Heart left ventricle (tissue), 16 donors: ENCODE measurements at regions of chr5 and their contacts with region 1.

Region 1: GRCh38 chr5:1140171-1140817 is 28.4 kb upstream of the SLC12A7 start:
- DNase-seq: peak; percentile 81 to 91 (median 84)
- ATAC-seq: peak; percentile 72 to 89 (median 78)
- H3K4me3 ChIP-seq: no peak overlapping the region
- H3K27ac ChIP-seq: no peak overlapping the region
- H3K4me1 ChIP-seq: peaks cover 0 to 30% (median 13%) of the 10 kb centered on the region in 12 donors
- H3K27me3 ChIP-seq: no peaks in the 10 kb centered on the region
- CTCF ChIP-seq: peak; percentile 86 to 97 (median 90)
- POLR2A ChIP-seq: no peak

Region 2: DNA sequence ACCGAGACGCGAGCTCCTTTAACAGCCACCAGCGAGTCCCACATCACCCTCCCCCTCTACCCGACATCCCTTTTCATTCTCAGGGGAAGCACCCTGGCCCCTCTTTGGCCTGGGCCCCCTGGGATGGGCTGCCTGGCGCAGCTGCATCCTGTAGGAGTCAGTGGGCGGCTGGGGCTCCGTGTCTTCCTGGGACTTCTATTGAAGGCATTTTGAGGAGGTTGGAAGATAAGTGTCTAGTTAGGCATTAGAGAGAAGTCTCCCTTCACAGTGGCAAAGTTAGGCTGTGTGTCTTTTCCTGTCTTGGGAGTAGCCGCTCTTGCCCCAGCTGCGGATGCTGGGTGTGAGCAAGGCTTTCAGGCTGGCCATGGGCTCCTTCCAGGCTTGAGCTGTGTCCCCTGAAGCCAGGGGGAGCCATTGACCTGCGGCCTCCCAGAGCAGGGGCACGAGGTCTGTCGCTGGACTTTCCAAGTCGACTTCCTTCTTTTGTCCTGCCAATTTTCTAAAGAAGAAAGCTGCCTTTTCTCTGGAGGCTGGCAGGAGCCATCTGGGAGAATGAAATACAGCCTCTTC is 150.2 kb before region 1 on chr5:
- intact Hi-C with region 1: loop called in 4 of 10 experiments (anchors 1 to 5 kb)
- DNase-seq: peak; percentile 77 to 84 (median 80)
- ATAC-seq: peak; percentile 60 to 89 (median 71)
- H3K4me3 ChIP-seq: no peak overlapping the region
- H3K27ac ChIP-seq: peak overlapping the region; percentile 24 to 75 (median 57)
- H3K4me1 ChIP-seq: peaks cover 0 to 50% (median 18%) of the 10 kb centered on the region in 12 donors
- H3K27me3 ChIP-seq: no peaks in the 10 kb centered on the region
- CTCF ChIP-seq: peak; percentile 55 to 80 (median 70)
- POLR2A ChIP-seq: no peak

Region 3: DNA sequence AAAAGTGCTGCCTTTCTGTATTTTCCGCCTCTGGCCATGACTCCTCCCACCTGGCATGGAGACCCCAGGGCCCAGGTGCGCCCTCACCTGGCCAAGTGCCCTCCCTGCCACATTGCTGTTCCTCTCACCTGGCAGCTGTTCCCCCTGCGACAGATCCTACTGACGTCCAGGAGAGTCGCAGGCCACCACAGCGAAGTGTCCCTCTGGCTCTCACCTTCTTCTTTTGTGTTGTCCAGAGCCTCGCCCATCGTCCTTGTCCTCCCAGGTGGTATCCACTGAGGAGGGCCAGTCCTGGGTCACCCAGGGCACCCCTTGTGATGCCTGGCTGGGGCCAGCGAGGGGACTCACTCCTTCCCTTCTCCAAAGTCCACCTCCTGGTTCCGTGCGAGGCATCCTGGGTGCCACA is 129.1 kb before region 1 on chr5:
- intact Hi-C with region 1: loop called in 6 of 10 experiments (anchors 2 to 10 kb)
- DNase-seq: peak in 4 of 5 donors; percentile 13 to 52 (median 20)
- ATAC-seq: no peak
- H3K4me3 ChIP-seq: no peak overlapping the region
- H3K27ac ChIP-seq: no peak overlapping the region
- H3K4me1 ChIP-seq: peaks cover 0 to 30% (median 18%) of the 10 kb centered on the region in 12 donors
- H3K27me3 ChIP-seq: peaks cover 6 to 37% (median 11%) of the 10 kb centered on the region in 9 donors
- CTCF ChIP-seq: peak in 6 of 12 donors; percentile 9 to 37 (median 20)
- POLR2A ChIP-seq: no peak

Region 4: DNA sequence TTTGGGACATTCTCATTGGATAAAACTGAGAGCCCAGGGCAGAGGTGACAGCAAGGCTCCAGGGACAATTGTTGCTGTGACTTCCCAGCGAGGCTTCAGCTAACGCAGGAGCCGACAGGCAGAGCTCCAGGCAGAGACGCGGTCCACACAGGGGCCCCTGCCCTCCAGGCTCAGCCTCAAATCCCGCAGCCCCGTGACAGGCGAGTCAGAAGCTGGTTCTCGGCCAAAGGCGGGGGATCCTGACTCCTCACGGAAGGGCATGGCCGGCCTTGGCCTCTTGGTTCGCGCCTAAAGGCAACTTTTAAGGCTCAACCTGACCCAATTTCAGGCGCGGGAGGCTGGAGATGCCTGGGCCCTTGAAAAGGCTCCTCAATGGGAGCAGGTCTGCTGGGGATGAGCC is 49.8 kb before region 1 on chr5:
- intact Hi-C with region 1: loop called in 1 of 10 experiments (anchors 2 kb)
- DNase-seq: peak; percentile 63 to 83 (median 74)
- ATAC-seq: peak; percentile 1 to 52 (median 28)
- H3K4me3 ChIP-seq: no peak overlapping the region
- H3K27ac ChIP-seq: peak overlapping the region; percentile 31 to 81 (median 53)
- H3K4me1 ChIP-seq: peaks cover 0 to 56% (median 29%) of the 10 kb centered on the region in 12 donors
- H3K27me3 ChIP-seq: no peaks in the 10 kb centered on the region
- CTCF ChIP-seq: no peak
- POLR2A ChIP-seq: no peak

Region 5: DNA sequence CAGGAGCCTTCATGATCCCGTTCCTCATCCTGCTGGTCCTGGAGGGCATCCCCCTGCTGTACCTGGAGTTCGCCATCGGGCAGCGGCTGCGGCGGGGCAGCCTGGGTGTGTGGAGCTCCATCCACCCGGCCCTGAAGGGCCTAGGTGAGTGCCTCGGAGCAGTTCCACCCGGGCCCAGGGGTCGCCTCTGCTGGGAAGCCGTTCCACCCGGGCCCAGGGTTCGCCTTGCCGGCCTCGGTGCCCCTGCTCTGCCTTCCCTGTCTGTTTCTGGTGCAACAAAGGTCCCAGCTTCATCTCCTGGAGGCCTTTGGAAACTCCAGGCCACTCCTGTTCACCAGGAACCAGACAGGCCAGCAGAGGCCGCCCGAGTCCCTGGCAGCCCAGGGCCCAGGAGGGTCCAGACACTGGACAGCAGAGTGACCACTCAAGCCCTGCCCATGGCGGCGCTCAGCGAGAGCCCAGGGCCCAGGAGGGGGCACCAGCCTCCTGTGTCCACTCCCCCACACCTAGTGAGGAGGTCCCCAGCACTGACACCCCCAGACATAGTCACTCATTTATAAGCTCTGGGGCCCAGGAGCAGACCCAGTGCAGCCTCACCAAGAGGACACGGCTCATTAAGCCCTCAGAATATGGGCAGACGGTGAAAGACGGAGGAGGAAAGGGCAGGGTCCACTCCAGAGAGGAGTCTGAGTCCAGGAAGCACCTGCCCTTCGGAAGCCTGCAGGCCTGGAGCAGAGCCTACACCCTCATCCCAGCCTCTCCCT is 68.6 kb after region 1 on chr5:
- intact Hi-C with region 1: no loop called
- DNase-seq: peak in 2 of 5 donors; percentile 26 to 52
- ATAC-seq: peak in 1 of 4 donors; percentile 6
- H3K4me3 ChIP-seq: no peak overlapping the region
- H3K27ac ChIP-seq: no peak overlapping the region
- H3K4me1 ChIP-seq: no peaks in the 10 kb centered on the region
- H3K27me3 ChIP-seq: peaks cover 0 to 29% (median 2%) of the 10 kb centered on the region in 9 donors
- CTCF ChIP-seq: peak in 5 of 12 donors; percentile 13 to 37 (median 34)
- POLR2A ChIP-seq: no peak